HCT116 (cell line): ENCODE measurements at regions of chr18 and their contacts with region 1.

Region 1: DNA sequence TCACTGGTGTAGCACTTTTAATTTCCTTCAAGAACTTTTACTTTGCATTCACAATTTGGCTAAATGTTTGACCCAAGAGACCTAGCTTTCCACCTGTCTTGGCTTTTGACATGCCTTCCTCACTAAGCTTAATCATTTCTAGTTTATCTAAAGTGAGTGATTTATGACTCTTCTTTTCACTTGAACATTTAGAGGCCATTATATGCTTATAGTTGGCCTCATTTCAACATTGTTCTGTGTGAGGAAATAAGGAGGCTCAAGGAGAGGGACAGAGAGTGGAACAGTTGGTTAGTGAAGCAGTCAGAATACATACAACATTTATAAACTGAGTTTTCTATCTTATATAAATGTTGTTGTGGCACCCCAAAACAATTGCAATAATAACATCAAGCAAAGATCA is 489.3 kb upstream of the CDH2 start:
- DNase-seq: no peak
- ATAC-seq: no peak
- H3K4me3 ChIP-seq: no peak overlapping the region
- H3K27ac ChIP-seq: no peak overlapping the region
- H3K4me1 ChIP-seq: no peaks in the 10 kb centered on the region
- H3K27me3 ChIP-seq: no peaks in the 10 kb centered on the region
- CTCF ChIP-seq: no peak
- POLR2A ChIP-seq: no peak
- RAD21 ChIP-seq: no peak

Region 2: GRCh38 chr18:28647961-28648360 is 18.3 kb before region 1 on chr18:
- CTCF ChIA-PET with region 1: no interaction called
- POLR2A ChIA-PET with region 1: no interaction called
- RAD21 ChIA-PET with region 1: no interaction called
- intact Hi-C with region 1: no loop called
- DNase-seq: no peak
- ATAC-seq: no peak
- H3K4me3 ChIP-seq: no peak overlapping the region
- H3K27ac ChIP-seq: no peak overlapping the region
- H3K4me1 ChIP-seq: no peaks in the 10 kb centered on the region
- H3K27me3 ChIP-seq: no peaks in the 10 kb centered on the region
- CTCF ChIP-seq: no peak
- POLR2A ChIP-seq: no peak
- RAD21 ChIP-seq: no peak

Region 3: GRCh38 chr18:28716333-28716732 is 50.1 kb after region 1 on chr18:
- CTCF ChIA-PET with region 1: no interaction called
- POLR2A ChIA-PET with region 1: no interaction called
- RAD21 ChIA-PET with region 1: no interaction called
- intact Hi-C with region 1: loop called (anchors 10 kb)
- DNase-seq: no peak
- ATAC-seq: no peak
- H3K4me3 ChIP-seq: no peak overlapping the region
- H3K27ac ChIP-seq: no peak overlapping the region
- H3K4me1 ChIP-seq: no peaks in the 10 kb centered on the region
- H3K27me3 ChIP-seq: no peaks in the 10 kb centered on the region
- CTCF ChIP-seq: no peak
- POLR2A ChIP-seq: no peak
- RAD21 ChIP-seq: no peak